ENCODE measurements at regions of chr11 and their contacts with region 1.

Region 1: GRCh38 chr11:47552566-47553416 is at the start of gene CELF1:
- DNase-seq: peak; percentile 80 to 90
- ATAC-seq: peak; percentile 93 to 94
- H3K4me3 ChIP-seq: peak within 1 kb of the TSS; percentile 95
- H3K27ac ChIP-seq: peak within 1 kb of the TSS; percentile 94 to 100
- H3K4me1 ChIP-seq: peaks cover 35% of the 10 kb centered on the region
- CTCF ChIP-seq: peak; percentile 91
- EP300 ChIP-seq: peak in 1 of 2 experiments; percentile 19; a peak in 1 of 5 replicates
- POLR2A ChIP-seq: peak; percentile 73
- RAD21 ChIP-seq: peak; percentile 30 to 49; a peak in 4 of 5 replicates
- polyA plus RNA-seq, gene CELF1: 137 and 138 TPM in 2 replicates

Region 2: DNA sequence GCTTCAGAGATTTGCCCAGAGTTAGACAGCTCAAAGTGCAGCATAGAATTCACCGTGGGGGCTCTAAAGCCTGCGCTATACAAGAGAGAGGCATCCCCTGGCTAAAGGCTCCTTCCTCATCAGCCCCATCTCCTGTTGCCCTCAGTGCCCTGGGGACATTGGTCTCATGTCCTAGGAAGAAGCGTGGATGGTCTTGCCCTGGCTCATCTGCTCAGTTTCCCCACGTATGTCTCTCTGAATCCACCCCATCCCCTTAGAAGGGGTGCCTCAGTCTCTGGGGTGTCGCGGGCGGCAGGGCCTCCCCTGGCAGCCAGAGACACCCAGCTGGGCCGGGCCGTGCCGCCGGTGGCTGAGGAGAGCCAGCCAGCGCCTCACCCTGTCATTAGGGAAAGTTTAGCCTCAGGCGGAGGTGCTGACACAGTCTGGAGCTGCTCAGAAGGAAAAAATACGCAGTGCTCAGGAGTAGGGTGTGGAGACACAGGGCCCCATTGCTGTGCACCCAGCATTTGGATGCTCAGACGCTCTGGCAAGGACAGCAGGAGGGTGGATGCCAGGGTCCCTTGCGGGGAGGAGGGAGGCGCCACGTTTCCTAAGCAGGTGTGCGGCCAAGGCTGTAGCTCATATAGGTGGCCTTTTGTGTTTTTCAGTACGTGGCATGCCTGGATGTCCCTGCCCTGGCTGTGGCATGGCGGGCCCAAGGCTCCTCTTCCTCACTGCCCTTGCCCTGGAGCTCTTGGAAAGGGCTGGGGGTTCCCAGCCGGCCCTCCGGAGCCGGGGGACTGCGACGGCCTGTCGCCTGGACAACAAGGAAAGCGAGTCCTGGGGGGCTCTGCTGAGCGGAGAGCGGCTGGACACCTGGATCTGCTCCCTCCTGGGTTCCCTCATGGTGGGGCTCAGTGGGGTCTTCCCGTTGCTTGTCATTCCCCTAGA is 143.1 kb before region 1 on chr11:
- CTCF ChIA-PET with region 1: no interaction called
- POLR2A ChIA-PET with region 1: no interaction called
- DNase-seq: no peak
- ATAC-seq: no peak
- H3K4me3 ChIP-seq: peak overlapping the region; percentile 92
- H3K27ac ChIP-seq: peak overlapping the region; percentile 89 to 92; a peak in 5 of 6 replicates
- H3K4me1 ChIP-seq: peaks cover 19% of the 10 kb centered on the region
- CTCF ChIP-seq: no peak
- EP300 ChIP-seq: no peak
- POLR2A ChIP-seq: no peak
- RAD21 ChIP-seq: no peak

Region 3: DNA sequence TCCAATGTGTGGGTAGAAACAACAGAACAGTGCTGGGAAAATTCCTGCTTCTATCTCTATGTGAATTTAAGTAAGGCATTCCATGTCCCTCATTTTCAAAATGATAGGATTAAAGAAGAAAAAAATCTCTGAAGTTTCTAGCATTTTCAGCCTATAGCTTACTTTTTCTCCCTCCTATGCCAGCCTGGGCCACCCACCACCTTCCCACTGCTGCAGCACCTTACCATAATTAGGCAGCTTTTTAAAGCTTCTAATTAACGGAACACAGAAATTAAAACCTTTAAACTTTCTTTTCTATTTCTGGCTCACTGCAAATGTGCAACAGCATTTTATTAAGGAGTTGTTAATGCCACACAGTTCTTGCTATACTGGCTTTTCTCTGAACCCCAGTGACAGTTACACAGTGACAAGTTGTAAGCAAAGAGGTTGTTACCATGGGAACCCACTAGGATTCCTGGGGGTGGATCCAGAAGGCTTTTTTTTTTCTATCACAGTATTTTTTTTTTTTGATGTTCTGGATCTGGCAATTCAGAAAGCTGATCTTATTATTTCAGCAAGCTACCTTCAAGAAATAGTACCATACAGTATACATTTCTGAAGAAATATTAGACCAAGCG is 20.1 kb before region 1 on chr11:
- CTCF ChIA-PET with region 1: interaction called, 41 read pairs
- POLR2A ChIA-PET with region 1: interaction called, 4 read pairs
- DNase-seq: no peak
- ATAC-seq: peak in 1 of 2 experiments; percentile 42; a peak in 1 of 6 replicates
- H3K4me3 ChIP-seq: no peak overlapping the region
- H3K27ac ChIP-seq: no peak overlapping the region
- H3K4me1 ChIP-seq: peaks cover 25% of the 10 kb centered on the region
- CTCF ChIP-seq: no peak
- EP300 ChIP-seq: no peak
- POLR2A ChIP-seq: no peak
- RAD21 ChIP-seq: no peak

Region 4: GRCh38 chr11:47538741-47539574 is 13.8 kb before region 1 on chr11:
- CTCF ChIA-PET with region 1: interaction called, 41 read pairs
- POLR2A ChIA-PET with region 1: interaction called, 4 read pairs
- DNase-seq: no peak
- ATAC-seq: no peak
- H3K4me3 ChIP-seq: no peak overlapping the region
- H3K27ac ChIP-seq: no peak overlapping the region
- H3K4me1 ChIP-seq: peaks cover 35% of the 10 kb centered on the region
- CTCF ChIP-seq: no peak
- EP300 ChIP-seq: no peak
- POLR2A ChIP-seq: no peak
- RAD21 ChIP-seq: no peak

Region 5: GRCh38 chr11:47565340-47566148 is 12.8 kb after region 1 on chr11 and contains the start of gene PTPMT1:
- CTCF ChIA-PET with region 1: interaction called, 15 read pairs
- POLR2A ChIA-PET with region 1: no interaction called
- DNase-seq: peak; percentile 55 to 70
- ATAC-seq: peak; percentile 95 to 97
- H3K4me3 ChIP-seq: peak within 1 kb of the TSS; percentile 92
- H3K27ac ChIP-seq: peak within 1 kb of the TSS; percentile 95 to 96
- H3K4me1 ChIP-seq: peaks cover 17% of the 10 kb centered on the region
- CTCF ChIP-seq: no peak
- EP300 ChIP-seq: no peak
- POLR2A ChIP-seq: peak; percentile 87
- RAD21 ChIP-seq: no peak
- polyA plus RNA-seq, gene PTPMT1: 58.8 and 69.2 TPM in 2 replicates

Region 6: DNA sequence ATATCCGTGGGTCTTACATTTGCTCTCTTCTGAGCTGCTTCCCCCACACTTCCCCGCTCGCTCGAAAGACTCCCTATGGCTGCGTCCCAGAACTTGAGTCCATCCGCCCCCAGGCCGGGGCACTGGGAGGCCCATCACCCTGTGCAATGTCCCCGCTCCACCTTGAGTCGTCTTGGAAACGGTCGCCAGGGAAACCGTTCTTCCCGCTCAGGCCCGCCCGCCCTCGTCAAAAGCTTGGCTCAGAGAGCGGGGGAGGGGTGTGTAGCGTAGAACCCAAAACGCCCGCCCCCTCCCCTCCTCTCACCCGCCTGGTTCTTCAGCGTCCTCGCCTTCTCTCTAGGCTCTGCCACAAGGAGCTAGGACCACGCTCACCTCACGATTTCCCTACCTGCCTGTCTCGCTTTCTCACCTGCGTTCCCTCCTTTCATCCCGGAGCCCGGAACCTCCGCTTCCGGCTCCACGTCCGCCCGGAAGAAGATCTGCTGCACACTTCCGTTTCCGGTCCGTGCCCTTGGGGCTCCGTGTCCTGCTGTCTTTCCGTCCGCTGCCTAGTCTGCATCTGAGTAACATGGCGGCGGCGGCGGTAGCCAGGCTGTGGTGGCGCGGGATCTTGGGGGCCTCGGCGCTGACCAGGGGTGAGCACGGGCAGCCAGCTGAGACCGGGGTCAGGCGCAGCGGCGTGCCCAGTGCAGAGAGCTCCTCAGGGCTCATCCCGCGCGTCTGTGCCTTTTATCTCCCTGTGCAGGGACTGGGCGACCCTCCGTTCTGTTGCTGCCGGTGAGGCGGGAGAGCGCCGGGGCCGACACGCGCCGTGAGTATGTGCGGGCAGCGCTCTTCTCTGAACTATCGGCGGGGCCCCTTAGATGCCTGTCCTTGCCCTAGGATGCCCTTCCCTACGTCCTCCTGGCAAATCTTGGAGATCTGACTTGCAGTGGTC is 26.0 kb after region 1 on chr11 and contains the starts of genes KBTBD4 and NDUFS3:
- CTCF ChIA-PET with region 1: interaction called, 17 read pairs
- POLR2A ChIA-PET with region 1: interaction called, 4 read pairs
- DNase-seq: peak; percentile 90 to 92
- ATAC-seq: peak; percentile 95 to 96
- H3K4me3 ChIP-seq: peak within 1 kb of the TSS; percentile 88
- H3K27ac ChIP-seq: peak within 1 kb of the TSS; percentile 92 to 96
- H3K4me1 ChIP-seq: peaks cover 20% of the 10 kb centered on the region
- CTCF ChIP-seq: no peak
- EP300 ChIP-seq: no peak
- POLR2A ChIP-seq: peak; percentile 78
- RAD21 ChIP-seq: peak in 1 of 2 experiments; percentile 20; a peak in 1 of 5 replicates
- polyA plus RNA-seq, gene KBTBD4: 21.0 and 23.4 TPM in 2 replicates
- polyA plus RNA-seq, gene NDUFS3: 155 and 156 TPM in 2 replicates

Region 7: GRCh38 chr11:47611348-47611794 is 58.6 kb after region 1 on chr11:
- CTCF ChIA-PET with region 1: no interaction called
- POLR2A ChIA-PET with region 1: no interaction called
- DNase-seq: no peak
- ATAC-seq: peak in 1 of 2 experiments; percentile 15; a peak in 1 of 6 replicates
- H3K4me3 ChIP-seq: no peak overlapping the region
- H3K27ac ChIP-seq: no peak overlapping the region
- H3K4me1 ChIP-seq: no peaks in the 10 kb centered on the region
- CTCF ChIP-seq: no peak
- EP300 ChIP-seq: no peak
- POLR2A ChIP-seq: no peak
- RAD21 ChIP-seq: no peak